ENCODE measurements at regions of chr5 and their contacts with region 1.

Region 1: DNA sequence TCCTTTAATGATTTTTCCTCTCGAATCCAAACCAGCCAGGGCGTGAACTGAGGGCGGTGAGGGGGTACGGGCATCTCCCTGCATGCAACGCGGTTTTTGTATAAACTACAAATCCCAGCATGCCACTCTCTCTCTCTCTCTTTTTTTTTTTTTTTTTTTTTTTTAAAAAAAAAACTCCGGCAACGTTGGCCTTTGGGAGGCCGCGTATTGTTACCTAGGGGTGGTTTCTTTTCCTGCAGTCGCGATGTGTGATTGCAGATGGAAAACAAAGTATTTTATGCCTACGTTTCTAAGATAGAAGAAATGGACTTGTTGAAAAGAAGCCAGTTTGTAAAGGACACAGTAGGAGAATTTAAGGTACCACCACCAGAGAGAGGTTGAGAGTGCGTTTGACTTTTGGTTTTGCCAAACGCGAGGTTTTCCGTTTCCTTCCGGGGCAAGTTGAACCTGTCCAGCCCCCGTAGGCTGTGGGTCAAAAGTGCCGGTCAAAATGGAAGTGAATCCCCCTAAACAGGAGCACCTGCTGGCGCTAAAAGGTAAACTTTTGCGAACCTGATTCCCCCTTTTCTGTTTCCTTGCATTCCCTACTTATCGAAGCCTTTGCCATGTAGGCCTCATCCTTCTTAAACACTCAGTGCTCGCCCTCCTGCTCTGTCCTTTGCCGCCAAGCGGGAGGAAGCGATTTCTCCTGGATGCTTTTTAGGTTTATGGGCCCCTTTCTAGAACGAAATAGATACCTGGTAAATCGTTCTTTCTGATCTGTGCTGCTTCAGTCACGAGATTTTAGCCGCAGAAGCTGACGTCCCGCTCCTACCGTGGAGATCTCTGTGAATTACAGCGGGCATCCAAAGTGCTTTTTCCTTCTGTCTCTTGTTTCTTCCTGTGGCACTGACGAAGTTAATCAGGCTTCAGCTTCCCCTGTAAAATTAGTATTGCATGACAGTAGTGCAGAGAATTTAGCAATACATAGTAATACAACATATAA is at the starts of genes SHLD3 and TRAPPC13:
- DNase-seq: peak; percentile 81 to 85 (median 83)
- H3K4me3 ChIP-seq: peak within 1 kb of the TSS; percentile 86 to 98 (median 94)
- H3K4me3 Mint-ChIP-seq: peak within 1 kb of the TSS; percentile 90 to 99
- H3K27ac ChIP-seq: peak within 1 kb of the TSS; percentile 87 to 93
- H3K27ac Mint-ChIP-seq: peak within 1 kb of the TSS; percentile 94 to 98 (median 97)
- H3K4me1 ChIP-seq: peaks cover 18 to 35% of the 10 kb centered on the region in 2 donors
- H3K4me1 Mint-ChIP-seq: peaks cover 29% of the 10 kb centered on the region
- H3K27me3 ChIP-seq: no peaks in the 10 kb centered on the region
- H3K27me3 Mint-ChIP-seq: no peaks in the 10 kb centered on the region
- CTCF ChIP-seq: no peak
- polyA plus RNA-seq, gene SHLD3: 2.0 to 4.9 (median 2.6) TPM
- polyA plus RNA-seq, gene TRAPPC13: 12.0 to 17.3 (median 14.9) TPM

Region 2: GRCh38 chr5:65562731-65563701 is 61.8 kb before region 1 on chr5 and contains the starts of genes CENPK and PPWD1:
- intact Hi-C with region 1: loop called (anchors 2 kb)
- DNase-seq: peak; percentile 91 to 95 (median 94)
- H3K4me3 ChIP-seq: peak within 1 kb of the TSS; percentile 72 to 97 (median 92)
- H3K4me3 Mint-ChIP-seq: peak within 1 kb of the TSS; percentile 90 to 97
- H3K27ac ChIP-seq: peak within 1 kb of the TSS; percentile 96 to 99
- H3K27ac Mint-ChIP-seq: peak within 1 kb of the TSS; percentile 98 to 100 (median 99)
- H3K4me1 ChIP-seq: peaks cover 22 to 27% of the 10 kb centered on the region in 2 donors
- H3K4me1 Mint-ChIP-seq: peaks cover 21% of the 10 kb centered on the region
- H3K27me3 ChIP-seq: no peaks in the 10 kb centered on the region
- H3K27me3 Mint-ChIP-seq: peaks cover 0 to 2% (median 0%) of the 10 kb centered on the region in 3 donors
- CTCF ChIP-seq: no peak
- polyA plus RNA-seq, gene CENPK: 0.27 to 1.8 (median 0.83) TPM
- polyA plus RNA-seq, gene PPWD1: 7.7 to 23.9 (median 12.3) TPM

Region 3: DNA sequence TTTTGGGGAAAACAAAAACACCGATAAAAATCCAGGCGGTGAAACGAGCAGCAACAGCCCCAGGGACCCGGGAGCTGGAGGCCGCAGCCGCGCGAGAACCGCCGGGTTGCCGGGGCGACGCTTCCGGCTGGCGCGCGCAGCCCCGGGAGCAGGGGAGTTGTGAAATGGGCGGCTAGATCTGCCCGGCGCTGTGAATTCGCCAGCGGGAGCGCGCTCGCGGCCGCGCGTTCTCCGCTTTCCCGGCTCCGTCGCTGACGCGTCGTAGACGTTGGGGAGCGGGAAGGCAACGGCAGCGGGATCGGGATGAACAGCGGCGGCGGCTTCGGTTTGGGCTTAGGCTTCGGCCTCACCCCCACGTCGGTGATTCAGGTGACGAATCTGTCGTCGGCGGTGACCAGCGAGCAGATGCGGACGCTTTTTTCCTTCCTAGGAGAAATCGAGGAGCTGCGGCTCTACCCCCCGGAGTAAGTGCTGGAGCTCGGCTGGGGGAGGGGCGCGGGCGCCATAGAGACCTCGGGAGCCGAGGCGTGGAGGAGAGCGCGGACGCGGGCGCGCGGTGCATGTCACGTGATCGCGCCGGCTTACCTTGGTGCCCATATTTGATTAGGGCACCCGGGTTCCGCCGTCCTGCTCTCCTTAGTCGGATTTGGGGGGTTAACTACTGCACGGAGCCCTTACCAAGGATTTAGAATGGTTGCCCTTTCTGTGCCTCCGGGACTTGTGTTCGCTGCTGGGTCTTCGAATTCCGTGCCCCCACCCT is 519.4 kb after region 1 on chr5 and contains the start of gene SREK1:
- intact Hi-C with region 1: loop called (anchors 5 to 10 kb)
- DNase-seq: peak; percentile 85 to 87 (median 85)
- H3K4me3 ChIP-seq: peak within 1 kb of the TSS; percentile 66 to 99 (median 86)
- H3K4me3 Mint-ChIP-seq: peak within 1 kb of the TSS; percentile 97
- H3K27ac ChIP-seq: peak within 1 kb of the TSS; percentile 98 to 100
- H3K27ac Mint-ChIP-seq: peak within 1 kb of the TSS; percentile 99 to 100 (median 100)
- H3K4me1 ChIP-seq: peaks cover 11 to 26% of the 10 kb centered on the region in 2 donors
- H3K4me1 Mint-ChIP-seq: peaks cover 27% of the 10 kb centered on the region
- H3K27me3 ChIP-seq: no peaks in the 10 kb centered on the region
- H3K27me3 Mint-ChIP-seq: no peaks in the 10 kb centered on the region
- CTCF ChIP-seq: no peak
- polyA plus RNA-seq, gene SREK1: 6.4 to 34.8 (median 9.8) TPM